ENCODE measurements at regions of chr16 and their contacts with region 1.

Region 1: DNA sequence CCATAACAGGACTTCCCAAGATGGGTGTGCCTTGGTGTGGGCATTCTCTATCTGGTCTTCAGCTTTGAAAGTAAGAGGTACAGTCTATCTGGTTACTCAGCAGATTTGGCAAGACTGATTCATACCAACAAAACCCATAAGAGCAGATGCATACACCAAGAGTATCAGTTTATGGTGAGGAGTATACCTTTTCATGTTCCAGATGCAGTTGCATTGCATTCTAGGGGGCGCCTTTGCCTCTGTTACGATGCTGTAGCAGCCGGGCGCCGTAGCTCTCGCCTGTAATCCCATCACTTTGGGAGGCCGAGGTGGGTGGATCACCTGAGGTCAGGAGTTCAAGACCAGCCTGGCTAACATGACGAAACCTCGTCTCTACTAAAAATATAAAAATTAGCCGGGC is 31.1 kb upstream of the CARMIL2 start:
- DNase-seq: no peak
- ATAC-seq: no peak
- H3K4me3 ChIP-seq: no peak overlapping the region
- H3K27ac ChIP-seq: no peak overlapping the region
- H3K4me1 ChIP-seq: no peaks in the 10 kb centered on the region
- H3K27me3 ChIP-seq: no peaks in the 10 kb centered on the region
- CTCF ChIP-seq: peak; percentile 6; the same call in 1 of the 2 replicates
- POLR2A ChIP-seq: no peak
- RAD21 ChIP-seq: no peak

Region 2: DNA sequence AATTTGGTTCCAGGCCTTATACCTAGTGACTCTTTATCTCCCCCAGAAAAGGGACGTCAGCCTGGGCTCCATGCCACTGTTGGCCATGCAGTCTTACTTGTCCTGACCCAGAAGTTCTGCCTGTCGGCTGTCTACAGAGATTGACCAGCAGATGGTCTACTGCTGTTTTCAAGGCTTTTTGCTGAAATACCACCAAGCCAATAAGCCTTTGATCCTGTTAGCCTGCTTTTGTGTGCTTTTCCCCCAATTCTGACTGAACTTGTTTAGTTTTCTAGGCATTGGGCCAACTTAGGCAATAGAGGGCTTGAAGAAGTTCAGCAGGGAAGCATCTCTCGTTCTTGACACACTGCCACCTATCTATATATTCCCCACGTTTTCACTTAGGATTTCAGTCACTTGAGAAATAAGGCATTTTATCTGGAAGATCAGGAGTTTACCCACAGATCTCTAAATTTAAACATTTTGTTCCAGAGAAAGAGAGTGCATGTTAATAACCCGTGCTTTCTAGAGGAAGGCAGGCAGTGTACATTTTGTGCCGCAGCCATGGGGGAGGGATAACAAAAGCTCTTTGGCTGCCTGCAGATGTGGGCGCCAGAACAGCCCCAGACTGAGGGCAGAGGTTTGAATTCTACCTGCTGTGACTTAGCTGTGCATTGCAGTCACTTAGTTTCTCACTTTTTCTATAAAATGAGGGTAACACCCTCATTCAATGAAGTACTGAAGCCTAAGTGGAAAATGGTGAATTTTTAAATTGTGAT is 18.8 kb after region 1 on chr16:
- CTCF ChIA-PET with region 1: no interaction called
- POLR2A ChIA-PET with region 1: interaction called, 12 read pairs
- dilution Hi-C with region 1: no loop called
- in situ Hi-C with region 1: no loop called
- intact Hi-C with region 1: no loop called
- DNase-seq: peak; percentile 79
- ATAC-seq: peak; percentile 74
- H3K4me3 ChIP-seq: no peak overlapping the region
- H3K27ac ChIP-seq: peak overlapping the region; percentile 4; the same call in 1 of the 2 replicates
- H3K4me1 ChIP-seq: peaks cover 5% of the 10 kb centered on the region
- H3K27me3 ChIP-seq: no peaks in the 10 kb centered on the region
- CTCF ChIP-seq: 0 out of 2 replicates have a peak, but pooled peaks have one; percentile 3
- POLR2A ChIP-seq: no peak
- RAD21 ChIP-seq: no peak

Region 3: DNA sequence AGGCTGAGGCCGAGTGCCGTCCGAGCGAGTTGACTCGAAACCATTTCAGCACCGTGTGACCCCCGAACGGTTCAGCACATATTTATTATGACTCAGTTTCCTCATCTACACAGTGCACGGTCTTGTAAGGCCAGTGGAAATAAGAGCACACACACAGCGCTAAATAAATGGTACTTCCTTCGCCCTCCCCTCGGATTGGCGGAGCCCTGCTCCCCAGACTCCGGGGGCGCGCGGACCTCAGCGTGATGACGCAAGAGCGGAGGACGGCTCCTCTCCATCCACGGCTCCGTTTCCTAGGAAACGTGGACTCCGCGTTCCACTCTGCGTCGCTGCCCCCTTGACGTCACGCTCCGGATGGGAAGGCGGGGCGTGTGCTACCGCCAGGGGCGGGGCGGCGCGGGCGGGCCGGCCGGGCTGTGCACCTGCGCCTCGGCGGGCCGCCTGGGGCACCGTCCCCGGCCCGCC is 46.8 kb after region 1 on chr16 and contains the start of gene PARD6A:
- CTCF ChIA-PET with region 1: no interaction called
- POLR2A ChIA-PET with region 1: no interaction called
- dilution Hi-C with region 1: no loop called
- in situ Hi-C with region 1: no loop called
- intact Hi-C with region 1: no loop called
- DNase-seq: peak; percentile 96
- ATAC-seq: peak; percentile 93
- H3K4me3 ChIP-seq: peak within 1 kb of the TSS; percentile 64
- H3K27ac ChIP-seq: peak within 1 kb of the TSS; percentile 65
- H3K4me1 ChIP-seq: peaks cover 6% of the 10 kb centered on the region; the same call in 1 of the 2 replicates
- H3K27me3 ChIP-seq: no peaks in the 10 kb centered on the region
- CTCF ChIP-seq: no peak
- POLR2A ChIP-seq: 0 out of 2 replicates have a peak, but pooled peaks have one; percentile 61
- RAD21 ChIP-seq: no peak
- total RNA-seq, gene PARD6A: 0.28 and 0.36 TPM in 2 replicates

Region 4: DNA sequence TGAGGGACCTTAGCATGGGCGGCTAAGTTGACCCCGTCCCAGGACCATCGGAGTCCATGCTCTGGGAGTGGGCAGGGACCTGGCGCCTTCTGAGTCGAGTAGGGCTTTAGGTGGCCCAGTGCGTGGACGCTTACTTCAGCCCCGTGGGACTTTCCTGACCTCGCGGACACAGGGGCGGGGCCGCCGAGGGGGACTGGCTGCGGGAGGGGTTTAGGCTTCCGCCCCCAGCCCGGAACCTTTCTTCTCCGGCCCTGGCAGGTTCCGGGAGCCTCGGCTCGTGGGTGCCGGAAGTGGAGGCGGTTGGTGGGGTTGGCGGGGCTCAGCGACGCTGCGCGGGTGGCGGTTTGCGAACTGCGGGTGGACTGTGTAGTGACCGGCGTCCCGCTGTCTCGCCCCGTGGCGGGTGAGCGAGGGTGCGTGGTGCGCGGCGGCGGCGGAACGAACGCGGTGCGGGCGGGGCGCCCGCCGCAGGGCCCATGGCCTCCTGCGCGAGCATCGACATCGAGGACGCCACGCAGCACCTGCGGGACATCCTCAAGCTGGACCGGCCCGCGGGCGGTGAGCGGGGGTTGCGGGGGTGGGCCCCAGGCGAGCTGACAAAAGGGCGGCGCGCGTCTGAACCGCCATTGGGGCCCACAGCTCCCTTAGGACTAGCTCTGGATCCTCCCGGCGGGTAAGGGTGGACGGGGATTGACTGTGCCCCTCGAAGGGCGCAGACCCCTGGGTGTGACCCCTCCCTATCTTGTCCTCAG is 259.2 kb after region 1 on chr16 and contains the start of gene EDC4:
- CTCF ChIA-PET with region 1: no interaction called
- POLR2A ChIA-PET with region 1: no interaction called
- dilution Hi-C with region 1: no loop called
- in situ Hi-C with region 1: no loop called
- intact Hi-C with region 1: no loop called
- DNase-seq: peak; percentile 78
- ATAC-seq: peak; percentile 91
- H3K4me3 ChIP-seq: peak within 1 kb of the TSS; percentile 89
- H3K27ac ChIP-seq: peak within 1 kb of the TSS; percentile 82
- H3K4me1 ChIP-seq: peaks cover 10% of the 10 kb centered on the region
- H3K27me3 ChIP-seq: no peaks in the 10 kb centered on the region
- CTCF ChIP-seq: no peak; the same call in 1 of the 2 replicates
- POLR2A ChIP-seq: peak; percentile 73
- RAD21 ChIP-seq: no peak; the same call in 1 of the 2 replicates
- total RNA-seq, gene EDC4: 33.2 and 34.2 TPM in 2 replicates

Region 5: GRCh38 chr16:67883872-67884261 is 270.1 kb after region 1 on chr16:
- CTCF ChIA-PET with region 1: no interaction called
- POLR2A ChIA-PET with region 1: no interaction called
- dilution Hi-C with region 1: no loop called
- in situ Hi-C with region 1: no loop called
- intact Hi-C with region 1: no loop called
- DNase-seq: peak; percentile 26
- ATAC-seq: peak; percentile 30
- H3K4me3 ChIP-seq: no peak overlapping the region
- H3K27ac ChIP-seq: no peak overlapping the region
- H3K4me1 ChIP-seq: peaks cover 4% of the 10 kb centered on the region; the same call in 1 of the 2 replicates
- H3K27me3 ChIP-seq: no peaks in the 10 kb centered on the region
- CTCF ChIP-seq: peak; percentile 77
- POLR2A ChIP-seq: no peak
- RAD21 ChIP-seq: peak; percentile 74